ENCODE measurements at regions of chr1 and their contacts with region 1.

Region 1: DNA sequence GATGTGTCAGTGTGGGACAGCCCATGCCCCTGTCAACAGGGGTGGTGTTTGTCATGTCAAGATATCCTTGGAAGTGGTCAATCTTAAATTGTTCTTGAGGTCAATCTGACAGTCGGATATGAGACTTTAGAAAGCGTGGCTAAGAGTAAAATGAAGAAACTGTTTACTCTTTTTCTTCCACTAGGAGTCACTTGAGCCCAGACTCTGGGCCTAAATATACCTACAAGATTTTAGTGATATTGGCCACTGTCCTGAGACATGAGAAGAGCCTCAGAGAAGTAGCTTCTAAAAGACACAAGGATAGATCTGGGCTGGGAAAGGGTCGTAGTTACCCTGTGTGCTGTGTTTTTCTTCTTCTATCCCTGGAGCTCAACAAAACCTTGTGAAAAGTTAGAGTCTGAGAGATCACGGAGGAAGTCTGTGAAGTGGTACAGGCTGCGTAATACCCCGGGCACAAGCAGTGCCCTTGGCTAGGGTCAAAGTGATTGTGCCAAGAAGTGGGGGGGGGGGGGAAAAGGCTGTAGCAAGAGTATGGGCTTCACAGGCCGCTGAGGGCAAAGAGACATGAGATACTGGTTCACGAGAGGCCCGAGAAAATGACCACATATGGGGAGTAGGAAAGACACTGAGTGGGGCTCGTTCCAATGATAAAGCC is 355.2 kb upstream of the GREM2 start:
- DNase-seq: peak in 3 of 7 donors; percentile 9 to 33 (median 13)
- H3K4me3 ChIP-seq: no peak overlapping the region
- H3K27ac ChIP-seq: no peak overlapping the region
- H3K4me1 ChIP-seq: no peaks in the 10 kb centered on the region
- H3K27me3 ChIP-seq: no peaks in the 10 kb centered on the region
- CTCF ChIP-seq: peak in 5 of 6 experiments; percentile 53 to 66 (median 57)
- POLR2A ChIP-seq: no peak

Region 2: DNA sequence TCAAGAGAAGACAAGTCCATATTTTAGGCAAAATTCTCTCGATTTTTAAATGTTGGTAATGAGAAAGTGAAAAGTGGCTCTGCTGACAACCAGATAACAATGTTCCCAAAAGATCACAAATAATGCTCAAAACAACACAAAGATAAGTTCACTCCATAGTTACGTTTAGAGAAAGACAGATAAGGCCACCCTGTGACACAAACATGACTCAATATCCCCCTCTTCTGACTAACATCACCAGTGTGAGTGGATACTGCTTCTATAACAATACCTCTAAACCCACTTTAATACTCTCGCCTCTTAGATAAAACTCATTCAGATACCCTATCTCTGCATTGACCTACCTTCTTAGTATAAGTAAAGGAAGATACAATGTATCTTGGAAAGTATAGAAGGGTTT is 441.0 kb after region 1 on chr1:
- intact Hi-C with region 1: loop called in 1 of 2 experiments (anchors 10 kb)
- DNase-seq: no peak
- H3K4me3 ChIP-seq: no peak overlapping the region
- H3K27ac ChIP-seq: no peak overlapping the region
- H3K4me1 ChIP-seq: no peaks in the 10 kb centered on the region
- H3K27me3 ChIP-seq: no peaks in the 10 kb centered on the region
- CTCF ChIP-seq: peak in 4 of 6 experiments; percentile 14 to 48 (median 28)
- POLR2A ChIP-seq: no peak

Region 3: GRCh38 chr1:241499910-241500309 is 532.7 kb after region 1 on chr1:
- intact Hi-C with region 1: loop called in 1 of 2 experiments (anchors 10 kb)
- DNase-seq: peak in 4 of 7 donors; percentile 16 to 37 (median 22)
- H3K4me3 ChIP-seq: no peak overlapping the region
- H3K27ac ChIP-seq: no peak overlapping the region
- H3K4me1 ChIP-seq: no peaks in the 10 kb centered on the region
- H3K27me3 ChIP-seq: no peaks in the 10 kb centered on the region
- CTCF ChIP-seq: peak; percentile 16 to 55 (median 42)
- POLR2A ChIP-seq: no peak

Measured in adrenal gland (tissue), 19 donors.